Uterus (tissue), 4 donors: ENCODE measurements at regions of chr1 and their contacts with region 1.

Region 1: DNA sequence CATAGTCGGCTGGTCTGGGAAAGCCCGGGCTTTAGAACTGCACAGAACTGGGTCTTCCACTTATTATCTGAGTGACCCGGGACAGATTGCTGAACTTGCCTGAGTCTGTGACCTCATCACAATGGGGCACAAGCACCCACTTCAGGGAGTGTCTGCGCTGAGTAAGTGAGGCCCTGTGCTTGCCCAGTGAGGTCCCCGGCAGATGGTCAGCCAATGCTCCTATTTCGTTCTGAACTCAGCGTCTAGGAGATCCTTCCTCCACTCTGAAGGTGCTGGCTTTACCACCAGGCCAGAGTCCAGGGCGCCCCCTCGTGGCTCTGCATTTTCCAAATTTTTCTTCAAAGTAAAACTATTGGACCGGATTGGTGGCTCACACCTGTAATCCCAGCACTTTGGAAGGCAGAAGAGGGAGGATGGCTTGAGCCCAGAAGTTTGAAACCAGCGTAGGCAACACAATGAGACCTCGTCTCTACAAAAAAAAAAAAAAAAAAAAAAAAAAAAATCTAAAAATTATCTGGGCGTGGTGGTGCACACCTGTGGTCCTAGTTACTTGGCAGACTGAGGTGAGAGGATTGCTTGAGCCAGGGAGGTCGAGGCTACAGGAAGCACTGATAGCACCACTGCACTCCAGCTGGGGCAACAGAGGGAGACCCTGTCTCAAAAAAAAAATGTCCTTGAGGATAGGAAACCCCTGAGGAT is 61.7 kb downstream of the FCRL5 start:
- DNase-seq: peak; percentile 33 to 62
- H3K4me3 ChIP-seq: no peak overlapping the region
- H3K27ac ChIP-seq: no peak overlapping the region
- H3K4me1 ChIP-seq: no peaks in the 10 kb centered on the region
- H3K27me3 ChIP-seq: no peaks in the 10 kb centered on the region
- CTCF ChIP-seq: peak; percentile 30 to 56 (median 46)
- POLR2A ChIP-seq: no peak

Region 2: GRCh38 chr1:157369808-157370521 is 120.7 kb before region 1 on chr1:
- intact Hi-C with region 1: loop called (anchors 10 kb)
- DNase-seq: peak in 1 of 2 donors; percentile 38
- H3K4me3 ChIP-seq: no peak overlapping the region
- H3K27ac ChIP-seq: no peak overlapping the region
- H3K4me1 ChIP-seq: no peaks in the 10 kb centered on the region
- H3K27me3 ChIP-seq: no peaks in the 10 kb centered on the region
- CTCF ChIP-seq: peak; percentile 63 to 86 (median 76)
- POLR2A ChIP-seq: no peak

Region 3: DNA sequence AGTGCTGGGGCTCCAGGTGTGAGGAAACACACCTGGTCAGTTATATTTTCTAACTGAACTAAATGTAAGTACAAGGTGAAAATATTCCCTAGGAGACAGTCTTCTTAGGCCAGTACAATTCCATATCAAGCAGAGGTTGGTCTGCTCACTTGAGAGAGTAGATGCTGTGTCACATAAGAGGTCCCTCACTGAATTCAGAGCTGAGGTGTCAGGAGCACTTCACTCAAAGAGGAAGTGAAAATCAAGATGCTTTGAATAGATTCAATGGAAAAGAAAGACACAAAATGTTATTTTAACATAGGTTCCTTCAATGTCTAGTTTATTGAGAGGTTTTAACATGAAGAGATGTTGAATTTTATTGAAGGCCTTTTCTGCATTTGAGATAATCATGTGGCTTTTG is 214.3 kb after region 1 on chr1:
- intact Hi-C with region 1: no loop called
- DNase-seq: no peak
- H3K4me3 ChIP-seq: no peak overlapping the region
- H3K27ac ChIP-seq: no peak overlapping the region
- H3K4me1 ChIP-seq: no peaks in the 10 kb centered on the region
- H3K27me3 ChIP-seq: no peaks in the 10 kb centered on the region
- CTCF ChIP-seq: no peak
- POLR2A ChIP-seq: no peak